PC-3 (cell line): ENCODE measurements at regions of chr7 and their contacts with region 1.

Region 1: GRCh38 chr7:94657771-94658693 is 2.1 kb upstream of the SGCE start:
- DNase-seq: peak; percentile 99
- ATAC-seq: peak; percentile 84
- H3K4me3 ChIP-seq: peak overlapping the region; percentile 96
- H3K27ac ChIP-seq: no peak overlapping the region
- H3K4me1 ChIP-seq: peaks cover 18% of the 10 kb centered on the region
- H3K27me3 ChIP-seq: no peaks in the 10 kb centered on the region
- CTCF ChIP-seq: no peak

Region 2: GRCh38 chr7:94405506-94405905 is 252.5 kb before region 1 on chr7:
- CTCF ChIA-PET with region 1: no interaction called
- POLR2A ChIA-PET with region 1: no interaction called
- intact Hi-C with region 1: no loop called
- DNase-seq: no peak
- ATAC-seq: no peak
- H3K4me3 ChIP-seq: no peak overlapping the region
- H3K27ac ChIP-seq: no peak overlapping the region
- H3K4me1 ChIP-seq: peaks cover 12% of the 10 kb centered on the region
- H3K27me3 ChIP-seq: no peaks in the 10 kb centered on the region
- CTCF ChIP-seq: no peak

Region 3: DNA sequence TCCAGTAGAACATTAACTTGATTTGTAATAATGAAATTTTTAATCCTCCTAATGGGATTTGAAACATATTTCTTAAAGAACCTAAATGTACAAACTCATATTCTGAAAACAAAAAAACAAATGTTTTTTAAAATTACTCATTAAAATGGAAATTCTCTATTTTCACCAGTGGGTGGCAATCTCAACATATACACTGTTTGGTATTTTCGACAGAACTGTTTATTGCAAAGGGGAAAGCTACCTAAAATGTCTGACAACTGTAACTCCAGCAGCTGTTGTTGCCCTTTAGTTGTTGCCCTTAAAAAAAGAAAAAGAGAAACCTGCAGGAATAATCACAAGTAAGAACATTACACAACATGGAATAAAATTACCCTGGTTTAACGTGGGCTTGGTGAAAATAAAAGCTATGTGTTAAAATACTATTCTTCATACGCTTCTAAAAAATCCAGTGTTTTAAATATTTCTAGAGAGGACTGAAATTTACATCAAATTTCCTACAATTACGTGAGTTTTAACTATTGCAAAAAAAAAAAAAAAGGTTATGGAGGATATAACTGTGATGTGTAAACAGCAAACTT is 208.8 kb before region 1 on chr7:
- CTCF ChIA-PET with region 1: interaction called, 23 read pairs
- POLR2A ChIA-PET with region 1: interaction called, 11 read pairs
- intact Hi-C with region 1: loop called (anchors 1 kb)
- DNase-seq: peak; percentile 58
- ATAC-seq: peak; percentile 48
- H3K4me3 ChIP-seq: no peak overlapping the region
- H3K27ac ChIP-seq: no peak overlapping the region
- H3K4me1 ChIP-seq: peaks cover 4% of the 10 kb centered on the region; the same call in 1 of the 2 replicates
- H3K27me3 ChIP-seq: no peaks in the 10 kb centered on the region
- CTCF ChIP-seq: peak; percentile 76

Region 4: GRCh38 chr7:94580596-94580995 is 77.4 kb before region 1 on chr7:
- CTCF ChIA-PET with region 1: interaction called, 5 read pairs
- POLR2A ChIA-PET with region 1: no interaction called
- intact Hi-C with region 1: loop called (anchors 1 kb)
- DNase-seq: peak; percentile 91
- ATAC-seq: peak; percentile 87
- H3K4me3 ChIP-seq: no peak overlapping the region
- H3K27ac ChIP-seq: peak overlapping the region; percentile 52
- H3K4me1 ChIP-seq: peaks cover 54% of the 10 kb centered on the region
- H3K27me3 ChIP-seq: no peaks in the 10 kb centered on the region
- CTCF ChIP-seq: no peak

Region 5: DNA sequence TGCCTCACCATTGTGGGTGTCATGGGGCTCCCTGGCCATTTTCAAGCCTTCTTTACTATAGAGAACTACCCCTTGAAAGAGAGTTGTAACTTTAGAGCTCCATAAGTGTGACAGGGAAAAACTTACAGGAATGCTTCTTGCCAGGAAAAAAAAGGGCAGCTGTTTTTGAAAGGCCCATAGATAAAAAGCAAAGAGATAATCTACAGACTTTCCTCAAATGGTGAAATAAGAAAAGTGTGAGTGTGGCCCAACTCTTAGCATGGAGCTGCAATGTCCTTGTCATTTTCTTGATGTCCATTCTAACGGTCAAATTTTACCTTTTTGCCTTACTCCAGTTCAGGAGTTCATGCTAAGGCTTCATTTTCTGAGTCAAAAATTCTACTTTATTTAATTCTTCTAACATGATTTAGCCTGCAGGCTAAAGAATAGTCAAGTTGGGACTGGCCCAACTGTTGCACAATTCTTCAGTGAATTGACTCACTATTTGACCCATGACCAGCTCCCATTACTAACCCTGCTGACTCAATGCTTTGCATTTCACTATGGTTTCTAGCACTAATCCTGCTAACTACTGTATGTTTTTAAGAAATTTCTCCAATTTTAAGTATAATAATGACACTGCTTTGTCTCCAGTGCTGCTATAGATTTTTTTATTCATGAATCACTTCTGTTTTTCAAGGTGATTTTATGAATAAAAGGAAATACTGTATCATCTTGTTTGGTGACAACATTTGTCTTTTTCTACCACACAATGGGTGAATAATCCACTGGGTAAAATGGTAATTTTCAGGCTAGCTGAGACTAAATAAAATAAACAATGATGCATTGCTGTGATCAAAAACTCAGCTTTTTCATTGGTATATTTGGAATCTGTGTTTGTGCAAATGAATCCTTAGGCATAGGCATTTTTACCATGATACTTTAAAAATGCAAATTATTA is 39.3 kb after region 1 on chr7:
- CTCF ChIA-PET with region 1: no interaction called
- POLR2A ChIA-PET with region 1: interaction called, 6 read pairs
- intact Hi-C with region 1: loop called (anchors 1 kb)
- DNase-seq: peak; percentile 96
- ATAC-seq: peak; percentile 66
- H3K4me3 ChIP-seq: peak overlapping the region; percentile 51
- H3K27ac ChIP-seq: peak overlapping the region; percentile 85
- H3K4me1 ChIP-seq: peaks cover 40% of the 10 kb centered on the region
- H3K27me3 ChIP-seq: no peaks in the 10 kb centered on the region
- CTCF ChIP-seq: no peak

Region 6: DNA sequence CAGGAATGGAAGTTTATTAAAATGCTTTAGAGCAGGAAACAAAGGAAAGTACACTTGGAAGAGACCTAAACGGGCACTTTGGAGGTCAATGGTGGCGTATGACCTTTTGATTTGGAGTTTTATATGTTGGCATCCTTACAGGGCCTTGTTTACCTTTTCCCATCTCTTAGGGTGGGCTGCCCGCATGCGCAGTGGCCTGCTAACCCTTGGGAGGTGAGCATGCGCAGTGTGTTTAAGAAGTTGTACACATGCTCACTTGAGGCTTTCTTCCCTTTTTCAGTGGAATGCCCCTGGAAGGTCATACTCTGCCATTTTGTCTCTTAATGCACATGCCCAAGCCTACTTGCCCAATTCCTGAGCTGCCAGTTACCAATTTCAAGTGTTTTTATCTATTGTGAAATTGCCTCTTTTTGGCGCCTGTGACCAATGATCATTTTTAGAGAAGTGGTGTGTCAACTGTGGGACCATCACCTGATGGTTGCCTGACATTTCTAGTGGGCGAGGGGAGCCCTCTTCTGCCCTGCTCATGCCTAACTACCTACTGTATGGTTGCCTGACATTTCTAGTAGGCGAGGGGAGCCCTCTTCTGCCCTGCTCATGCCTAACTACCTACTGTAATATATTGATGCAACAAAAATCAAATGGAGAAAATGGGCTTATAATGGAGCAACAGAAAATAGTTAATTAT is 387.3 kb after region 1 on chr7:
- CTCF ChIA-PET with region 1: no interaction called
- POLR2A ChIA-PET with region 1: no interaction called
- intact Hi-C with region 1: loop called (anchors 1 kb)
- DNase-seq: peak; percentile 66
- ATAC-seq: peak; percentile 99
- H3K4me3 ChIP-seq: no peak overlapping the region
- H3K27ac ChIP-seq: no peak overlapping the region
- H3K4me1 ChIP-seq: no peaks in the 10 kb centered on the region
- H3K27me3 ChIP-seq: no peaks in the 10 kb centered on the region
- CTCF ChIP-seq: peak; percentile 74

Region 7: DNA sequence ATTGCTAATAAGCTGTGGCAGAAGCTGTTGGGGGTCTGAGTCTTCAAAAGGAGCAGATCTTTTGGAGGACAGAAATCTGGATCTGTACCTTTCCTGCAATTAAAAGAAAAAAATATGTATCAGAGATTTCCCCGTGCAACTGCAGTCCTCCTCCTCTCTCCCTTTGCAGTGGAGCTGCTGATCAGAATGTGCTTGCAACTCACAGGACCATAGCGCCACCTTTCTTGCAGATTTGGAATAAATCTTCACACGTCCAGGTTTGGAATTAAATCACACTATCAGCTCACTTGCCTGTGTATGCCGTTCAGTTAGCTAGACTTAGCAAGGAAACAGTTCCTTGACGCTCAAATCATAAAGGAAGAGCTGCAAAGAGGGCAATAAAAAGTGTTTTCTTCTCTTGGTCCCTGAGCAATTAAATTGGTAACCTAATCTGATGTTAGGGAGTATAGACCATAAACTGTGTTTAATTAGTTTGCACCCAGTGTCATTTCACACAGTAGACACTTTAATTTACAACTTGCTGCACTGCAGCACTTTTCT is 588.9 kb after region 1 on chr7:
- CTCF ChIA-PET with region 1: interaction called, 6 read pairs
- POLR2A ChIA-PET with region 1: no interaction called
- intact Hi-C with region 1: loop called (anchors 2 kb)
- DNase-seq: peak; percentile 73
- ATAC-seq: peak; percentile 86
- H3K4me3 ChIP-seq: no peak overlapping the region
- H3K27ac ChIP-seq: no peak overlapping the region
- H3K4me1 ChIP-seq: peaks cover 4% of the 10 kb centered on the region; the same call in 1 of the 2 replicates
- H3K27me3 ChIP-seq: no peaks in the 10 kb centered on the region
- CTCF ChIP-seq: peak; percentile 85